MCF 10A (cell line): ENCODE measurements at regions of chr16 and their contacts with region 1.

Region 1: GRCh38 chr16:12819126-12820117 is 15.7 kb upstream of the CPPED1 start:
- DNase-seq: peak; percentile 77
- H3K4me3 Mint-ChIP-seq: no peak overlapping the region
- H3K27ac Mint-ChIP-seq: no peak overlapping the region
- H3K4me1 Mint-ChIP-seq: no peaks in the 10 kb centered on the region
- H3K27me3 Mint-ChIP-seq: no peaks in the 10 kb centered on the region
- CTCF ChIP-seq: peak; percentile 82

Region 2: GRCh38 chr16:12340151-12340733 is 479.2 kb before region 1 on chr16:
- CTCF ChIA-PET with region 1: no interaction called
- POLR2A ChIA-PET with region 1: no interaction called
- intact Hi-C with region 1: loop called (anchors 10 kb)
- DNase-seq: peak; percentile 54
- H3K4me3 Mint-ChIP-seq: no peak overlapping the region
- H3K27ac Mint-ChIP-seq: no peak overlapping the region
- H3K4me1 Mint-ChIP-seq: peaks cover 9% of the 10 kb centered on the region
- H3K27me3 Mint-ChIP-seq: no peaks in the 10 kb centered on the region
- CTCF ChIP-seq: peak; percentile 32

Region 3: DNA sequence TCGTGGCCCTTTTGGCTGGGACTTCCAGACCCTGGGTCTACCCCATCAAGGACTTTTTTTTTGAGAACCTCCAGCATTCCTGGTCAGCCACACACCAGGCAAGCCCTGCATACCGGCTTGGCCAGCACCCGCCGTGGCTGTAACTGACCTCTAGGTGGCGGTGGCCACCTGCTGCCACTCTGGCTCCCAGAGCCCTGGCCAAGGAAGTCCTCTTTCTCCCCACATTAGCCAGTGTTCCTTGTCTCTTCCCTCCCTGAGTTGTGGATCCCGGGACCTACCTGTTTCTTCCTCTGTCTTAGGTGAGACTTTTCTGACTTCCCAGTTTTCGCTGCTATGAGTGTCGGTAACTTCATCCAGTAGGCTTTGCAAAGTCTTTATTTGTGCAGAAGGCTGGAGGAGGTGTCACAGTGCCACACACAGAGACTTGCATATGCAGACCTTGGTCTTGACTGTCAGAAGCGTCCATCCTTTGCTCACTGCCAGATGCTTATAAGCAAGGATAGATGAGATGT is 364.1 kb before region 1 on chr16:
- CTCF ChIA-PET with region 1: interaction called, 6 read pairs
- POLR2A ChIA-PET with region 1: no interaction called
- intact Hi-C with region 1: loop called (anchors 1 kb)
- DNase-seq: peak; percentile 56
- H3K4me3 Mint-ChIP-seq: no peak overlapping the region
- H3K27ac Mint-ChIP-seq: no peak overlapping the region
- H3K4me1 Mint-ChIP-seq: no peaks in the 10 kb centered on the region
- H3K27me3 Mint-ChIP-seq: no peaks in the 10 kb centered on the region
- CTCF ChIP-seq: peak; percentile 95

Region 4: GRCh38 chr16:12573730-12574383 is 245.6 kb before region 1 on chr16:
- CTCF ChIA-PET with region 1: no interaction called
- POLR2A ChIA-PET with region 1: no interaction called
- intact Hi-C with region 1: loop called (anchors 1 kb)
- DNase-seq: peak; percentile 62
- H3K4me3 Mint-ChIP-seq: no peak overlapping the region
- H3K27ac Mint-ChIP-seq: no peak overlapping the region
- H3K4me1 Mint-ChIP-seq: no peaks in the 10 kb centered on the region
- H3K27me3 Mint-ChIP-seq: no peaks in the 10 kb centered on the region
- CTCF ChIP-seq: peak; percentile 64